ENCODE measurements at regions of chr10 and their contacts with region 1.

Region 1: GRCh38 chr10:12241810-12242529 is 46.0 kb downstream of the CDC123 start:
- DNase-seq: no peak

Region 2: DNA sequence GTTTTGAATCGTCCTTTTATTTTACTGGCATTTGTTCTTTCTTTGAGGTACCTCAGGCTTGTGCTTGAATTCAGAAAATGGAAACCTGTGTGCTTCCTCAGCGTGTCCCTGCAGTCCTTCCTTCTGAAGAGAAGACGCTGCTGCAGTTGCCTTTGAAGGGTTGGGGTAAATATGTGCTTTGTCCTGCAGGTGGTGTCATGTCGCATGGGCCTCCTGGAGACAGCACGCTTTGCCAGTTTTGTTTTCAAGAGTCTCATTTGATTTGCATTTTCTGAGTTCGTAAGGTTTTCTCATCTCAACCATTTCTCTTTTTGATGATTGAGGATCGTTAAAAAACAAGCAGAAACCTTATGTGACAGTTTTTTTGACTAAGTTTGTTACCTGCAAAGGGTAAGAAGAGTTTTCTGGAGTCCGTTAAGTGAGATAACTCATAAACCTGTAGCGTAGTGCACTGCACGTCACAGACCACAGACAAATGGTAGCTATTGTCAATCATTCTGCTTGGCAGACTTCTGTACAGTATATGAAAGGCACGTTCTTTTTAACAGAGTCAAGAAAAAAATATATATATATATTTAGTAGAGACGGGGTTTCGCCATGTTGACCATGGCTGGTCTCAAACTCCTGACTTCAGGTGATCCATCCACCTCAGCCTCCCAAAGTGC is 11.0 kb after region 1 on chr10:
- intact Hi-C with region 1: loop called in 1 of 2 experiments (anchors 1 kb)
- DNase-seq: no peak

Measured in posterior vena cava (tissue), 2 donors.